AG04449 (cell line): ENCODE measurements at regions of chr16 and their contacts with region 1.

Region 1: DNA sequence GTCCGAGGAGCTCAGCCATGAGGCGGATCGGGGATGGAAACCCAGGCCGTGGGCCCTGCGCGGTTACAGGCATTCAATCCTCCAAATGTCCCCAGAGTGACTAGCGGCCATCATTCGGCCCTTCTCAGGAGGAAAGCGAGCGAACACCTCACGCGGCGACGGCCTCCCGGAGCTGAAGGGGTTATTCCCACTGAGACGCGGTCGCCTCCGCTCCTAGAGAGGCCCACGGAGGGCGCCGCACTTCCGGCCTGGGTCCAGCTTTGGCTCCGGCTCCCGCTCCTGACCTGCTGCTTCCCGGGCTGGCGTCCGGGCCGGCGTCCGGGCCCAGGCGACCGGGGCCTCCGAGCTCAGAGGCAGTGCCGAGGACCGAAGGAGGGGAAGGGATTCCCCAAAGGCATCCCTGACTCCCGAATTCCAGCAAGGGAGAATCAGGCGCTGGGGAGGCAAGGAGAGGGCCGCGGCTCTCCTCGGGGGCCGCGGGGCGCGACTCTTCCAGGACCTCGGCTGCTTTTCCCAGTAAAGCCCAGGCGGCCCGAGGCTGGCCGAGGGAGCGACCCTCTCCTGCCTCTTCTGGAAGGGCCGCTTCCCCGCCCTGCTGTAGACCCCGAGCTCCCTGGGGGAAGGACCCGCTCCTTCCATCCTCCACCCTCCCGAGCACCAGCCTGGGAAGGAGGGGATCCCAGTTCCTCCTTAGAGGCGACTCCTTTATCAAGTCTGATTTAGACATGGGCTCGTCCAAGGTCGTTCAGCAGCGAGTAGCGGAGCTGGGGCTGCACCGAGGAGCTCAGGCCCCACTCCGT is 18.6 kb upstream of the ZNF629 start:
- DNase-seq: no peak
- H3K4me3 ChIP-seq: peak overlapping the region; percentile 77
- CTCF ChIP-seq: peak; percentile 38

Region 2: GRCh38 chr16:30637942-30638341 is 167.6 kb before region 1 on chr16:
- CTCF ChIA-PET with region 1: no interaction called
- POLR2A ChIA-PET with region 1: no interaction called
- DNase-seq: no peak
- H3K4me3 ChIP-seq: no peak overlapping the region
- CTCF ChIP-seq: peak; percentile 57

Region 3: GRCh38 chr16:30786936-30787612 is 18.5 kb before region 1 on chr16 and contains the start of gene ZNF629:
- CTCF ChIA-PET with region 1: interaction called, 14 read pairs
- POLR2A ChIA-PET with region 1: interaction called, 47 read pairs
- DNase-seq: no peak
- H3K4me3 ChIP-seq: peak within 1 kb of the TSS; percentile 93
- CTCF ChIP-seq: no peak

Region 4: GRCh38 chr16:30793508-30794069 is 12.0 kb before region 1 on chr16:
- CTCF ChIA-PET with region 1: interaction called, 14 read pairs
- POLR2A ChIA-PET with region 1: no interaction called
- DNase-seq: no peak
- H3K4me3 ChIP-seq: no peak overlapping the region
- CTCF ChIP-seq: no peak

Region 5: GRCh38 chr16:30874821-30875717 is 69.5 kb after region 1 on chr16:
- CTCF ChIA-PET with region 1: interaction called, 5 read pairs
- POLR2A ChIA-PET with region 1: interaction called, 17 read pairs
- DNase-seq: no peak
- H3K4me3 ChIP-seq: peak overlapping the region; percentile 93
- CTCF ChIP-seq: no peak

Region 6: GRCh38 chr16:30941600-30942425 is 136.2 kb after region 1 on chr16:
- CTCF ChIA-PET with region 1: interaction called, 12 read pairs
- POLR2A ChIA-PET with region 1: interaction called, 3 read pairs
- DNase-seq: no peak
- H3K4me3 ChIP-seq: no peak overlapping the region
- CTCF ChIP-seq: peak; percentile 88